ENCODE measurements at regions of chr20 and their contacts with region 1.

Region 1: DNA sequence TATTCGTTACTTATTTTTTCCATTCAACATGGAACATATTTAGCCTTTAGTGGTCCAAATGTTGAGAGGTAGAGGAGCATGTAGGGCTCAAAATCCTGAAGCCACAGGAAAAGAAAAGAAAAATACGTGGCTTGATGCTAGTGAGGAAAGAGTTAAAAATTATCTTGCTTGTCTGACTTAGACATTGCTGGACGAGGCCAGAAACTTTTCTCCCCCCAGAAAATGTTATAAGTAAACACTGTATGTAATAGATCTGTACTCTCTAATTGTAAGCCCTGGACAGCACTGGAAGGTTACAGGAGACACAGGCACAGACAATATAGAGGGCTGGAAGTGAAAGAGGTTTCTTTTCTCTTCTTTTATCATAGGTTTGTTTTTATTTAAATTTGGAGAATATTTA is 165.6 kb downstream of the ZFP64 start:
- DNase-seq: no peak
- H3K4me3 ChIP-seq: no peak overlapping the region
- H3K27ac ChIP-seq: no peak overlapping the region
- H3K4me1 ChIP-seq: no peaks in the 10 kb centered on the region
- H3K27me3 ChIP-seq: no peaks in the 10 kb centered on the region
- CTCF ChIP-seq: no peak
- EP300 ChIP-seq: no peak
- POLR2A ChIP-seq: no peak

Region 2: DNA sequence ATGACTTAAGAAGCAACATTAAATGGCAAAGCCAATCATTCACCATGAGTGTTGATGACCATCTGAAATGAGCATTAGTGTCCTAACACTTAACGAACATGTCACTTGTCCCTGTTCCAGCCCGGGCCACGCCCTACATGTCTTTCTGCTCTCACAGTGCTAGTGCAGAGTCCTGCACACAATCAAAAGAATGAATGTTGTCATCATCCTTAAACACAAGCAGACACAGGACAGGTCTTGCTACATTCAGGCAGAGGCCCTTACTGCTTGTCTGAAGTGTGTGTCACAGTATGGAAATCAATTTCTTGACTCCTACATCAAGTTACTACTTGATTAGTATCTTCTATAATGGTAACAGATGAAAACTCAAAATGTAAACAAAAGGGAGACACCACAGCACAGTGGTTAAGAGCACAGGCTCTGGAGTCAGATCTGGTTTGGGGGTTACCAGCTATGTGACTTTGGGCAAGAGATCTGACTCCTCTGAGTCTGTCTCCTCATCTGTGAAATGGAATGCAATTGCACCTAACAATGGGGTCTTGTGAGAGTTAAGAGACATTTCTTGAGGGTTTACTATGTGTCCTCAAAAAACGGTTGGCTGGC is 1930.4 kb before region 1 on chr20:
- intact Hi-C with region 1: no loop called
- DNase-seq: no peak
- H3K4me3 ChIP-seq: no peak overlapping the region
- H3K27ac ChIP-seq: no peak overlapping the region
- H3K4me1 ChIP-seq: peaks cover 2% of the 10 kb centered on the region
- H3K27me3 ChIP-seq: no peaks in the 10 kb centered on the region
- CTCF ChIP-seq: no peak
- EP300 ChIP-seq: no peak
- POLR2A ChIP-seq: no peak

Region 3: GRCh38 chr20:51966291-51966971 is 59.5 kb before region 1 on chr20:
- intact Hi-C with region 1: loop called in 1 of 4 experiments (anchors 10 kb)
- DNase-seq: peak in 2 of 5 donors; percentile 8 to 24
- H3K4me3 ChIP-seq: no peak overlapping the region
- H3K27ac ChIP-seq: no peak overlapping the region
- H3K4me1 ChIP-seq: no peaks in the 10 kb centered on the region
- H3K27me3 ChIP-seq: no peaks in the 10 kb centered on the region
- CTCF ChIP-seq: no peak
- EP300 ChIP-seq: no peak
- POLR2A ChIP-seq: no peak

Region 4: DNA sequence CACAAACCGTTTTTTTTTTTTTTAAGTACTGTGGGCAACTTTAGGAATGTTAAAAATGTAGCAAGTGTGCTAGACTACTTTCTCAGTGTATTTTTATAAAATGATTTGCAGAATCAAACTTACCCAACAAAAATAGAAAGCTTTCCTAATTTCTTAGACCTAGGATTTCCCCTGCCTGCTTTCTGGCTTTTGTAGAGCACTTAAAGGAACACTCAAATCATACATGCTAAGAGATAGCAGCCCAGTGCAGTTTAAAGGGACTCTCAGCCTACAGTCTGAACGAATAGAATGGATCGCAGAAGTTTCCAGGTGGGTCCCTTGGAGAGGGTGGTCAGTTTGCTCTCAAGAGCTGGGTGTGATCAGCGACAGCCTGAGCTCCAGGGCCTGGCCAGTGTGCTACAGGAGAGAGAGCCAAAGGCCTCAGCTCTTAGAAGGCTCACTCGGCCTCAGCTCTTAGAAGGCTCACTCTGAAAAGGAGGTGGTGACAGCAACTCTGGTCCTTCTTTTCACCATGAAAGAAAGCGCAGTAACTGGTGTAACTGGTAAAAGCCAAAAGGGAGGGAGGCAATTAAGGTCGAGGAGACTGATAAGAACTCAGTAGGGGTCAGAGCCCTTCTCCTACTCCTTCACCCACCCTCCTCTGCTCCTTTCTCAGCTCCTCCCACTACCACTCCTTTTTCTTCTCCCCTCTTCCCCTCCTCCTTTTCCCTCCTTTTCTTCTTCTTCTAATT is 23.2 kb after region 1 on chr20:
- intact Hi-C with region 1: loop called in 1 of 4 experiments (anchors 1 kb)
- DNase-seq: no peak
- H3K4me3 ChIP-seq: no peak overlapping the region
- H3K27ac ChIP-seq: no peak overlapping the region
- H3K4me1 ChIP-seq: no peaks in the 10 kb centered on the region
- H3K27me3 ChIP-seq: no peaks in the 10 kb centered on the region
- CTCF ChIP-seq: no peak
- EP300 ChIP-seq: no peak
- POLR2A ChIP-seq: no peak

Region 5: GRCh38 chr20:53154540-53154939 is 1128.6 kb after region 1 on chr20:
- intact Hi-C with region 1: no loop called
- DNase-seq: no peak
- H3K4me3 ChIP-seq: no peak overlapping the region
- H3K27ac ChIP-seq: no peak overlapping the region
- H3K4me1 ChIP-seq: peaks cover 3% of the 10 kb centered on the region
- H3K27me3 ChIP-seq: no peaks in the 10 kb centered on the region
- CTCF ChIP-seq: no peak
- EP300 ChIP-seq: no peak
- POLR2A ChIP-seq: no peak

Measured in ovary (tissue), 10 donors.